ENCODE measurements at regions of chr9 and their contacts with region 1.

Region 1: DNA sequence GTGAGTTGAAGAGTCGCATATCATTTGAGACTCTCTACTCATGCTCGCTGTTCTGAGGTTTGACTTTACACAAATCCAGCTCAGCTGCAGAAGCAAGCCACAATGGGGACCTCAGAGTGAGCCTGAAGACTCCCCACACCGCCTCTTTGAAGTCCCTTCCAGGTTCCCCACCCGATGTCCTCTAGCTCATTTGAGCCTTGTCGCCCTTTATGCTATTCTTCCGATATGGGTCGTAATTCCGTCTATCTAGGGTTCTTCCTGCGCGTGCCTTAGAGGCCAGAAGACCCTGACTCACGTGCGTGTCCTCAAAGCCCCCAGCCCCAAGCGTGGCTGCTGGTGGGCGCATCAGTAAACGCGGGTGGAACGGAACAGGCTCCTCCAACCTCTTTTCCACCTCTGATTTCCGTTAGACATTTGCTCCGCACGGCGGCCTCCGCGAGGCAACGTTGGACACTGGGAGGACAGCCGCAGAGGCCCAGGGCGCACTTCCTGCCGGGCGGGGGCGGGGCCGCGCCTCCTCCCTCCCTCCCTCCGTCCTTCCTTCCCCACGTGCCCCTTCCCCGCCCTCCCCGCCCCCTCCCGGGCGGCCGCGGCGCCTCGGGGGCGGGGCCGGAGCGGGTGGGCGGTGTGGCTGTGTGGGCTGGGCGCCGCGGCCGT is at the start of gene SNX30:
- DNase-seq: peak; percentile 83 to 93 (median 89)
- H3K4me3 ChIP-seq: peak within 1 kb of the TSS; percentile 78 to 99 (median 94)
- H3K27ac ChIP-seq: peak within 1 kb of the TSS; percentile 83 to 100 (median 97)
- H3K27me3 ChIP-seq: no peaks in the 10 kb centered on the region
- CTCF ChIP-seq: peak in 48 of 56 donors; percentile 9 to 63 (median 42)
- total RNA-seq, gene SNX30: 19.1 to 51.5 (median 35.4) TPM

Region 2: DNA sequence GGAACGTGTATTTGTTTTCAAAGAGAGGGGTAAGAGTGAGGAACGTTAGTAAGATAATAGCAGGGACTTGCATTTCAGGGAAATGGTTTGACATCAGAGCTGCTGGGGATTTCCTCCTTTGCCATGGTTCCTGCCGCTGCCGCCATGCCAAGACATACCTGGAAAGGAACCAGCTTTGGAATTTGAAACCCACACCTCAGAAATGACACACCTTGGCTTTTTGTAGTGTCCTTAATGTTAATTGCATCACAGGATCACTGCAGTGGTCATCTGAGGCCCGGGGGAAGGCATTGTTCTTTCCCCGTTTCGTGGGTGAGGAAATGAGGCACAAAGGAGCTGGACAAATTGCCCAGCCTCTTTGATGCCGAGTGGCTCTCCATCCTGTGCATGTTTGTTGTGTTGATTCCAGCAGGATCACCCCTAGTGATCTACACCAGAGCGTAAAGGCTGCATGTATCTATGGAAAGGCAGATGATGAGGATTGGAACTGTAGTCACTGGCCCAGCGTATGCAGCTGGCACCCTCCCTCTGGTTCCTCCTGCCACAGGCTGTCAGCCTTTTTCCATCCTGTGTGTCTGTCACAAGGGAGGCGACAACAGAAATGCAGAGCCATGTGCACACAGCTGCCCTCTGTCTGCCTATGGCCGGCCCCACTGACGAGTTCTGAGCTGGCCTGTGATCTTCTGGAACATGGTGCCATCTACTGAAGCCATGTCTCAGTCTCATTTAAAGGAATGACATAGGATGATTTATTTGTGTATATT is 102.7 kb after region 1 on chr9:
- intact Hi-C with region 1: loop called (anchors 5 kb)
- DNase-seq: peak in 9 of 10 donors; percentile 51 to 89 (median 77)
- H3K4me3 ChIP-seq: peak overlapping the region in 1 of 59 donors; percentile 8
- H3K27ac ChIP-seq: peak overlapping the region in 57 of 59 donors; percentile 1 to 92 (median 76)
- H3K27me3 ChIP-seq: no peaks in the 10 kb centered on the region
- CTCF ChIP-seq: peak in 51 of 56 donors; percentile 17 to 80 (median 47)

Measured in dorsolateral prefrontal cortex (tissue), 120 donors.